ENCODE measurements at regions of chr12 and their contacts with region 1.

Region 1: DNA sequence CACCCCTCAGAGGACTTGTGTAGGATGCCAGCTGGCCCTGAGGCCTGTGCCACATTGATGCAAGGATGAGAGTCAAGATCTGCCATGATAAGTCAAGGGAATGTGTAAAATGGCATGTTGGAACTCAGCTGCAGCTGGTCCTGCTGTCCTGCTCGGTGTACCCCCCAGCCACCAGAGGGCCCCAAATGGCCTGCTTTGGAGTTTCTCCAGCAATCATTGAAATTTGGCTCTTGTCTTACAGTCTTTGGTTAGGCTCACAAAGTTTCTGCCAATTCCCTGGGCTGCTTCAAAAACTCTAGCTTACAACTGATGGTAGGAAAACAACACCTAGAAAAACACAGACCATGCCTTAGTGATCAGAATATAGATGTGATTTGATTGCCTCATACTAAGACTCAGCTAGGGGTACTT is 76.8 kb downstream of the HSD17B6 start:
- DNase-seq: peak; percentile 67 to 77
- H3K4me3 ChIP-seq: no peak overlapping the region
- H3K4me3 Mint-ChIP-seq: no peak overlapping the region
- H3K27ac Mint-ChIP-seq: no peak overlapping the region
- H3K4me1 ChIP-seq: no peaks in the 10 kb centered on the region
- H3K4me1 Mint-ChIP-seq: no peaks in the 10 kb centered on the region
- H3K27me3 ChIP-seq: no peaks in the 10 kb centered on the region
- H3K27me3 Mint-ChIP-seq: peaks cover 7% of the 10 kb centered on the region
- CTCF ChIP-seq: peak; percentile 73 to 88

Region 2: DNA sequence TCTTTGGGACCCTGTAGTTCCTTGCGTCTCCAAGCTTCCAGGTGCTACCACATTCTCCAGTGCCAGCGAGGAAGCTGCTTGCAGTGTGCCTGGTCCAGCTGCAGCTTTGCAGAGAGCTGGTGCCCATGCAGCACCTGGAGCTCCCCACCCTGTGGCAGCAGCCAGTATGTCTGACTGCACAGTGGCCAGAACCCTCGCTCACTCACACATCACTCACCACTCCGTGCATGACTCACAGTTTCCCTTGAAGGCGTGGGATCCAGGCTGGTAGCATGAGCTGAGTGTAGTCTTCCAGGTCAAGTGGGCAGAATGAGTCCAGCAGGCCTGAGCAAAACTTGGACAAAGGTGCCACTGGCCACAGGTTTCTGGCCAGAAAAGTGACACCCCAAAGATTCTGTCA is 60.7 kb after region 1 on chr12:
- CTCF ChIA-PET with region 1: no interaction called
- POLR2A ChIA-PET with region 1: no interaction called
- intact Hi-C with region 1: no loop called
- DNase-seq: no peak
- H3K4me3 ChIP-seq: no peak overlapping the region
- H3K4me3 Mint-ChIP-seq: no peak overlapping the region
- H3K27ac Mint-ChIP-seq: no peak overlapping the region
- H3K4me1 ChIP-seq: no peaks in the 10 kb centered on the region
- H3K4me1 Mint-ChIP-seq: no peaks in the 10 kb centered on the region
- H3K27me3 ChIP-seq: no peaks in the 10 kb centered on the region
- H3K27me3 Mint-ChIP-seq: no peaks in the 10 kb centered on the region
- CTCF ChIP-seq: no peak

Region 3: DNA sequence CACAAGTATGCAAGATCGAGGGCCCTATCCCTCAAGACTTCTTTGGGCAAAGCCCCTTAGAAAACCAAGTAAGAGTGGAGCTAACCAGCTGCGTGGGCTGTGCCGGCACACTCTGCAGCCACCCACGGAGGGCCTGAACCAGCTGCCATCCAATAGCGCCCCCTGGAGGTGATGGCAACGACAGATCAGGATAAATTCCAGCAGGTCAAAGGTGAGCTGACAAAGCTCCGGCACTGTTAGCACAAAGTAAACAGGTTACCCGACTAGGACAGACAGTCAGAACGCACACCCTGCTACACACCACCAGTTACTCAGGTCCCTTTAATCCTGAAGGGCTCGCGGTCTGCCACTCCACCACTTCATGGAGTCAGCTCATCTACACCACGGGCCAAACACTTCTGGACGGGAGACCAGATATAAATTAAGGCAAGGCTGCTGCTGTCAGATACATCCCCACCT is 161.6 kb after region 1 on chr12:
- CTCF ChIA-PET with region 1: interaction called, 15 read pairs
- POLR2A ChIA-PET with region 1: no interaction called
- intact Hi-C with region 1: loop called (anchors 1 kb)
- DNase-seq: peak; percentile 83 to 88
- H3K4me3 ChIP-seq: no peak overlapping the region
- H3K4me3 Mint-ChIP-seq: no peak overlapping the region
- H3K27ac Mint-ChIP-seq: no peak overlapping the region
- H3K4me1 ChIP-seq: peaks cover 17% of the 10 kb centered on the region
- H3K4me1 Mint-ChIP-seq: peaks cover 26% of the 10 kb centered on the region
- H3K27me3 ChIP-seq: no peaks in the 10 kb centered on the region
- H3K27me3 Mint-ChIP-seq: no peaks in the 10 kb centered on the region
- CTCF ChIP-seq: peak; percentile 75 to 79